Activated CD4-positive, alpha-beta memory T cell treated with anti-CD3 and anti-CD28 coated beads for 36 hours (primary cell): ENCODE measurements at regions of chr18 and their contacts with region 1.

Region 1: GRCh38 chr18:74390900-74391299 is 66.2 kb downstream of the DIPK1C start:
- DNase-seq: no peak
- H3K4me3 Mint-ChIP-seq: no peak overlapping the region
- H3K27ac Mint-ChIP-seq: no peak overlapping the region
- H3K4me1 Mint-ChIP-seq: peaks cover 13% of the 10 kb centered on the region
- H3K27me3 Mint-ChIP-seq: peaks cover 10% of the 10 kb centered on the region

Region 2: GRCh38 chr18:74370115-74370514 is 20.8 kb before region 1 on chr18:
- CTCF ChIA-PET with region 1: interaction called, 3 read pairs
- POLR2A ChIA-PET with region 1: no interaction called
- intact Hi-C with region 1: loop called (anchors 2 kb)
- DNase-seq: no peak
- H3K4me3 Mint-ChIP-seq: no peak overlapping the region
- H3K27ac Mint-ChIP-seq: no peak overlapping the region
- H3K4me1 Mint-ChIP-seq: peaks cover 31% of the 10 kb centered on the region
- H3K27me3 Mint-ChIP-seq: peaks cover 5% of the 10 kb centered on the region

Region 3: GRCh38 chr18:74430811-74431571 is 40.1 kb after region 1 on chr18:
- CTCF ChIA-PET with region 1: no interaction called
- POLR2A ChIA-PET with region 1: no interaction called
- intact Hi-C with region 1: no loop called
- DNase-seq: no peak
- H3K4me3 Mint-ChIP-seq: no peak overlapping the region
- H3K27ac Mint-ChIP-seq: no peak overlapping the region
- H3K4me1 Mint-ChIP-seq: no peaks in the 10 kb centered on the region
- H3K27me3 Mint-ChIP-seq: peaks cover 2% of the 10 kb centered on the region